ENCODE measurements at regions of chr16 and their contacts with region 1.

Region 1: DNA sequence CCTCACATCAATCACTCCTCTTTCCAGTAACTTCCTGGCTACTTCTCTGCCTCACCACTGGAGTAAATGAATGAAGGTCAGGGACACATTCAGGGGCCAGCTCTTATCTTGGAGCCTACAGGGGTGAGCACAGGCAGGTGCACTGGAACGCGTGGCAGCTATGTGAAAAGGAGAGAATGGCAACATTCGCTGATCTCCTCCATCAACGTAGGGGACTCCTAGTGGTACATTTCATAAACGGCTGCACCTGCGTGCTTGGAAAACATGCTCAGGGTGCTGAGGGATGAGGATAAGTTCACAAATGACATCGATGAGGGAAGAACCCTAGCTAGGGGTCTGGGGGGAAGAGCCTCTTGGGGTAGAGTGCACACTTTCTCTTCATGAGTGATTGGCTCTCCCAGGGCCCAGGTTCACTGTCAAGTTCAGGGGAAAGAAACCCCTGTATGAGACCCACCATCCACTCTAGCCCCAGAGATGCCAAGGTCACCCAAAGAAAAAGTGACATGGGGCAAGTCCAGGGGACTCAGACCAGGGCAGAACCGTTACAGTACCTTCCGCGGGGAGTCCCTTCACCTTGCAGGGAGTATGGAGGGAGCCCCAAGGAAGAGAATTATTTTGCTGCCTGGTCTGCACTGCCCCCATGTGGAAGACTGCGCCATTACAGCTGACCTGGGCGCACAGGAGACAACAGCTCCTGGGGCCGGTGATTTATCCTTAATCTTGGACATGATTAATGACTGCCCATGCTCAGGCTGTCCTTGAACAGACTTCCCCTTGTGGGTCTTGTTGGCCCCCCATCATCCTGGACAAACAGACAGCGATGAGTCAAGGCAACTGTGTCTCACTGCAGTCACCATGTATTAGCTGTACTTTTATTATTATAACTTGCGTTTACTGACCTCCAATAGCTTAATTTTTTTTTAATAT is 30.1 kb downstream of the VAC14 start:
- DNase-seq: peak; percentile 74
- ATAC-seq: peak; percentile 82
- H3K4me3 Mint-ChIP-seq: no peak overlapping the region
- H3K27ac Mint-ChIP-seq: peak overlapping the region; percentile 15
- H3K4me1 Mint-ChIP-seq: peaks cover 5% of the 10 kb centered on the region
- H3K27me3 Mint-ChIP-seq: no peaks in the 10 kb centered on the region

Region 2: GRCh38 chr16:70438969-70439862 is 331.7 kb before region 1 on chr16 and contains the start of gene ST3GAL2:
- CTCF ChIA-PET with region 1: no interaction called
- POLR2A ChIA-PET with region 1: no interaction called
- DNase-seq: peak; percentile 96
- ATAC-seq: peak; percentile 93
- H3K4me3 Mint-ChIP-seq: peak within 1 kb of the TSS; percentile 88
- H3K27ac Mint-ChIP-seq: peak within 1 kb of the TSS; percentile 91
- H3K4me1 Mint-ChIP-seq: peaks cover 35% of the 10 kb centered on the region
- H3K27me3 Mint-ChIP-seq: no peaks in the 10 kb centered on the region
- total RNA-seq, gene ST3GAL2: 34.1 to 39.0 TPM

Region 3: DNA sequence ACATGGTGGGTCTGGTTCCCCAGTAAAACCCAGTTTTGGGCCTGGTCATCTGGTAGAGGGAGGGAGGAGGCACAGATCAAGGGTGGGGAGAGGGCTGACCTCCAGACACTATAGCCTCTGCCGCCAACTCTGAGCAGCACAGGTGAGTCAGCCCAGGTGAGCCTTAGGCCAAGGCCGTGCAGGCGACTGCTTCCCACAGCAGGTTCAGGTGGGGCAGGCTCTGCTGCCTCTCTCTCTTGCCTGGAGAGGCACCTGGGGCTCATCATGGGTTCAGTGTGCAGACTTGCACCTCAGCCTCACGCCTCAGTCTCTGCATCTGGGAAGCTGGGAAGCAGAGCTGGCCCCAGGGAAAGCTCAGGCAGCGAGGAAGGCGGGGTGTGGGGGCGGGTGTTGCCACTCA is 162.4 kb before region 1 on chr16:
- CTCF ChIA-PET with region 1: no interaction called
- POLR2A ChIA-PET with region 1: no interaction called
- DNase-seq: no peak
- ATAC-seq: no peak
- H3K4me3 Mint-ChIP-seq: no peak overlapping the region
- H3K27ac Mint-ChIP-seq: no peak overlapping the region
- H3K4me1 Mint-ChIP-seq: peaks cover 8% of the 10 kb centered on the region
- H3K27me3 Mint-ChIP-seq: no peaks in the 10 kb centered on the region

Region 4: DNA sequence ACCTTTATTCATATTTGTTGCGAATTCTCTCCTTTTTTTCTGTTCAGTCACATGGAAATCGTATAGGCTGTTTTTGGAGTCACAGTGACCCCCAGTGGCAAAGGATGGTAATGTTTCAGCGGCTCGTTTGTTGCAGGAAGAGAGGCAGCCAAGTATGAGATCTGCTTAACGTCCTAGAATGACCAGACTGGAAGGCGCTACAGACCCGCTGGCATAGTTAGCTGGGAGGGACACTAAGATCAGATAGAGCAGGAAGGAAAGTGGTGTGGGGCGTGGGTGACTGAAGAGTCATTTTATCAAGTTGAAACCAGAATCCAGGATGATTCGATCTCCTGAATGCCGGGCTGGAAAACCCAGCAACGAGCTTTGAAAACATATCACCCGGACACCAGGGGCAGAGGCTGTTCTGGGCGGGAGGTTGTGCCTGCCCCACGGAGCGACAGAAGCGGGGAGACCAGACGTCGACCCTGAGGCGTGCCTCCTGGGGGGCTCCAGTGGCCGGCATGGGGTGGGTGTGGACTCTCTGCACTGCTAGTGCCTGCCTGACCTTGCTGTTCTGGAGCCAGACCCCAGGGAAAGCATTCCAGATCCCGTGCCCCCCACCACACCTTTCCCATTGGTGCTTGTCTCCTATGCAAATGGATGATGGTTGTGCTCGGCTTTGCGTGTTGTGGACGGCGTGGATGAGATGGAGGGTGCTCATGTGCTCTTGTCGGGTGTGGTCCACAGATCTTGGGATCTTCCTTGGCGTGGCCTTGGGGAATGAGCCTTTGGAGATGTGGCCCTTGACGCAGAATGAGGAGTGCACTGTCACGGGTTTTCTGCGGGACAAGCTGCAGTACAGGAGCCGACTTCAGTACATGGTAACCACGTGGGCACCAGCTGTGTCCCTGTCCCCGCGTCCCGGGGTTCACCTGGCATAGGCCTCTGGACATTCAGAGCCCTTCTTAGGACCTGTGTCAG is 116.8 kb before region 1 on chr16:
- CTCF ChIA-PET with region 1: interaction called, 60 read pairs
- POLR2A ChIA-PET with region 1: no interaction called
- DNase-seq: peak; percentile 88
- ATAC-seq: peak; percentile 65
- H3K4me3 Mint-ChIP-seq: peak overlapping the region; percentile 11
- H3K27ac Mint-ChIP-seq: peak overlapping the region; percentile 51
- H3K4me1 Mint-ChIP-seq: peaks cover 5% of the 10 kb centered on the region
- H3K27me3 Mint-ChIP-seq: peaks cover 2% of the 10 kb centered on the region

Region 5: GRCh38 chr16:70665113-70665965 is 105.5 kb before region 1 on chr16:
- CTCF ChIA-PET with region 1: interaction called, 21 read pairs
- POLR2A ChIA-PET with region 1: no interaction called
- DNase-seq: no peak
- ATAC-seq: no peak
- H3K4me3 Mint-ChIP-seq: no peak overlapping the region
- H3K27ac Mint-ChIP-seq: no peak overlapping the region
- H3K4me1 Mint-ChIP-seq: peaks cover 5% of the 10 kb centered on the region
- H3K27me3 Mint-ChIP-seq: no peaks in the 10 kb centered on the region

Region 6: GRCh38 chr16:70679666-70680494 is 91.0 kb before region 1 on chr16:
- CTCF ChIA-PET with region 1: interaction called, 31 read pairs
- POLR2A ChIA-PET with region 1: no interaction called
- DNase-seq: no peak
- ATAC-seq: no peak
- H3K4me3 Mint-ChIP-seq: no peak overlapping the region
- H3K27ac Mint-ChIP-seq: no peak overlapping the region
- H3K4me1 Mint-ChIP-seq: peaks cover 23% of the 10 kb centered on the region
- H3K27me3 Mint-ChIP-seq: peaks cover 2% of the 10 kb centered on the region

Region 7: GRCh38 chr16:70695331-70696070 is 75.4 kb before region 1 on chr16:
- CTCF ChIA-PET with region 1: interaction called, 21 read pairs
- POLR2A ChIA-PET with region 1: no interaction called
- DNase-seq: peak; percentile 68
- ATAC-seq: peak; percentile 56
- H3K4me3 Mint-ChIP-seq: peak overlapping the region; percentile 56
- H3K27ac Mint-ChIP-seq: peak overlapping the region; percentile 91
- H3K4me1 Mint-ChIP-seq: peaks cover 45% of the 10 kb centered on the region
- H3K27me3 Mint-ChIP-seq: no peaks in the 10 kb centered on the region

Region 8: DNA sequence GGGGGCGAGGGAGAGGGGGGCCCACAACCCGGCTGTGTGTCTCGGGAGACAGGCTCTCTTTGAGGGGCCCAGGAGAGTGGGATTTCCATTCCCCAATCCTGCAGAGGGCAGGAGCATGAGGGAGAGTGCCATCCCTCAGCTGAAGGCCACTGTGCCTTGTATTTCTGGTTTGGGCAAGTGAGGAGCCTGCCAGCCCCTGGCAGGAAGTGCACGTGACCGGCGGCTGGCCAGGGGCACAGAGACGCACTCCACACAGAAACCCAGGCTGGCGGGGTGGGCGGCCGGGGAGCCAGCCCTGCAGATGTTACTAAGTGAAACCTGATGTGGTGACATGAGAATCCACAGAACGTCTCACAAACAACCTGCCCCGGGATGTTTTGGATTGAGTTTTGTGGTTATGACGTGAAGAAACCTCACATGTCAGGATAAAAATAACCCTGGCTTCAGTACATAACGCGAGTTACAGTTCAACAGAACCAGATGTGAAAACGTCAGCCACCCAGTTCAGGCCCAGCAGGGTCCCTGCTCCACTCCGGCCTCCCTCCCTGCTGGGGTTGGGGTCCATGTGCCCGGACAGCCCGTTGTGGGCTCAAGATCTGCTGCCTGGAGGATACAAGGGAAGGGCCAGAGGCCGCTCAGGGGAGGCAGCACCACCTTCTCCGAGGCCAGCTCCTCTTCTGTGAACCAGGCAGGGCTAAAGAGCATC is 33.4 kb before region 1 on chr16:
- CTCF ChIA-PET with region 1: interaction called, 31 read pairs
- POLR2A ChIA-PET with region 1: interaction called, 3 read pairs
- DNase-seq: peak; percentile 91
- ATAC-seq: peak; percentile 92
- H3K4me3 Mint-ChIP-seq: peak overlapping the region; percentile 70
- H3K27ac Mint-ChIP-seq: peak overlapping the region; percentile 99
- H3K4me1 Mint-ChIP-seq: peaks cover 74% of the 10 kb centered on the region
- H3K27me3 Mint-ChIP-seq: no peaks in the 10 kb centered on the region

Region 9: DNA sequence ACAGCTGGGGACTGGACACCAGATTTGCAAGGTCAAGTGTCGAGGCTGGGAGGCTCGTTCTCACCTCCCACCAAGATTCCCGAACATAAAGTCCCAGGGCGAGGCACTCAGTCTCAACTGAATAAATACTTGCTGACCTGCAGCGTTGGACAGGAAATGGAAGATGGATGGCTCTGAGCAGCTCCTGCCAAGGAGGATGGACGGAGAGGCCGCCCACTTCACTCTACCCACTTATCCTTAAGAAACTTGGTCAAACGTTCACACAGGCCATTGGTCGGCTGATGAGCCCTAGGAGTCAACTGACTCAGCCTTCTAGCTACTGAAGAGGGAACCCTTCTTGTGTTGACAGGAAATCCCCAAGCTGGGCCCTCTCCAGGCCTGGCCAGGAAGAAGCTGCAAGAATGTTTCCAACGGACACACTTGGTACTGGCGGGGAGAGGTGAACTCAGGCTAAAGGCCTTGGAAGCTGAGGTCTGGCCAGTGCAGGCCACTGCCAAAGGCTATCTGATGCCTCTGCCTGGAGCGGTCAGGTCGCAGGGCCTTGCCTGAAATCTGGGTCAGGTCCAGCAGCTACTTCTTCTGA is 19.9 kb before region 1 on chr16:
- CTCF ChIA-PET with region 1: interaction called, 23 read pairs
- POLR2A ChIA-PET with region 1: interaction called, 3 read pairs
- DNase-seq: no peak
- ATAC-seq: no peak
- H3K4me3 Mint-ChIP-seq: no peak overlapping the region
- H3K27ac Mint-ChIP-seq: no peak overlapping the region
- H3K4me1 Mint-ChIP-seq: peaks cover 44% of the 10 kb centered on the region
- H3K27me3 Mint-ChIP-seq: no peaks in the 10 kb centered on the region

Region 10: DNA sequence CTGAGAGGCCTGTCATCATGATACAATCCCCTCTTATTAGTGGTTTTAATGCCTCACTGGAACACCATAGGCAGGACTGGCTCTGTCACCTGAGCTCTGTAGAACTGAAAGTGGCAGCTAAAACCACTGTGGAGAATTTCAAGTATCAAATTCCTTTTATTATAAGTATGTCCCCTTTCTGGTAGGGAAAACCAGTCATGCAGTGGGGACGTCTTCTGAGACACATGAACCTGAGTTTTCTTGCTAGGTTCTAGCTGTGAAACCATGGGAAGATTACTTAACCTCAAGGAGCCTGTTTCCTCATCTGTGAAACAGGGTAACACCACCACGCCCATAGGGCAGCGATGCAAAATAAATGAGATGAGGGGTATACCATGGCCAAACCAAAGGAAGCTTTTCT is 25.4 kb after region 1 on chr16:
- CTCF ChIA-PET with region 1: no interaction called
- POLR2A ChIA-PET with region 1: no interaction called
- DNase-seq: no peak
- ATAC-seq: no peak
- H3K4me3 Mint-ChIP-seq: no peak overlapping the region
- H3K27ac Mint-ChIP-seq: no peak overlapping the region
- H3K4me1 Mint-ChIP-seq: peaks cover 23% of the 10 kb centered on the region
- H3K27me3 Mint-ChIP-seq: no peaks in the 10 kb centered on the region